A549 (cell line): ENCODE measurements at regions of chr6 and their contacts with region 1.

Region 1: DNA sequence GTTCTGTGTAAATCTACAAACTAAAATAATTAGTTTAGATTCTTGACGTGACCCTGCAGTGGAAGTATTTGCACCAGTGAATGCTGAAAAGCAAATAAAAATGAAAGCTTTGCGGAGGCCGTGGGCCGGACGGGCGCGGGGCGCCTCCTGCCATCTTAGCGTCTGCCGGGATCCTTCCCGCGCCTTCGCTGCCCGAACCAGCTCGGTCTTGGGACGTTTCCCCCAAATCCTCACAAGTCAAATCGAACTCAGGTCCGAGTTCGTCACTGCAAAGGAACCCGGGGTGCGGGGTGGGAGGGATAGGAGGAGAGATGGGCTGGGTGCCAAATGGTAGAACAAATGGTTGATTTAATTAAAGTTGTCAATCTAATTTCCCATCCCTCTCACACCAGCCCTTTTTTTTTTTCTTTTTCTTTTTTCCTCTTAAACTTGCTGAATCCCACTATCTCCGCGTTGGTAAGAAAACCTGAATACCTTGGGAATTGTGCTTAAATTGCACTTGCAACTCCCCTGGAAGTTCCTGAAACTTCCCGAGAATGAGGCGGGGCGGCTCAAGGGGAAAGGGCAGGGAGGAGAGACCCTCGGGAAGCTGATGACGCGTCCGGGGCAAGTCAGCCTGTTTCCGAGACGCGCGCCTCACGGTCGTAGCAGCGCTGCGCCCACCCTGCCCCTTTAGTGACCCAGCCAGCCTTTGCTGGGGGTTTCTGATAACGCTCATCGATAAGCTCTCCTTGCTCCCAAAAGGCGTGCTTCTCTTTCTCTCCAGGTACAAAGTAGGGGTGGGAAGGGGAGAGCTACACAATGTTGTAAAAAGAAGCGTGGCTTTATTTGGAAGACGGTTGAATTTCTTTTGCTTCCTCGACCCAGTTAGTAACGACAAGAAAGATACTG is 1.8 kb downstream of the GJA1 start:
- DNase-seq: peak; percentile 14 to 54
- ATAC-seq: peak; percentile 42 to 64; a peak in 5 of 6 replicates
- H3K4me3 ChIP-seq: peak overlapping the region; percentile 95
- H3K27ac ChIP-seq: peak overlapping the region; percentile 87 to 96
- H3K4me1 ChIP-seq: peaks cover 44% of the 10 kb centered on the region
- CTCF ChIP-seq: no peak
- EP300 ChIP-seq: no peak
- POLR2A ChIP-seq: no peak
- RAD21 ChIP-seq: no peak

Region 2: GRCh38 chr6:122033539-122034181 is 596.5 kb after region 1 on chr6:
- CTCF ChIA-PET with region 1: interaction called, 31 read pairs
- POLR2A ChIA-PET with region 1: no interaction called
- DNase-seq: peak; percentile 18 to 57
- ATAC-seq: peak; percentile 73 to 83
- H3K4me3 ChIP-seq: no peak overlapping the region
- H3K27ac ChIP-seq: no peak overlapping the region; a peak in 1 of 6 replicates
- H3K4me1 ChIP-seq: 0 out of 3 replicates have a peak, but pooled peaks cover 3% of the 10 kb centered on the region
- CTCF ChIP-seq: peak; percentile 63
- EP300 ChIP-seq: no peak
- POLR2A ChIP-seq: no peak
- RAD21 ChIP-seq: peak; percentile 80 to 84